Activated naive CD4-positive, alpha-beta T cell treated with anti-CD3 and anti-CD28 coated beads for 36 hours (primary cell): ENCODE measurements at regions of chr22 and their contacts with region 1.

Region 1: DNA sequence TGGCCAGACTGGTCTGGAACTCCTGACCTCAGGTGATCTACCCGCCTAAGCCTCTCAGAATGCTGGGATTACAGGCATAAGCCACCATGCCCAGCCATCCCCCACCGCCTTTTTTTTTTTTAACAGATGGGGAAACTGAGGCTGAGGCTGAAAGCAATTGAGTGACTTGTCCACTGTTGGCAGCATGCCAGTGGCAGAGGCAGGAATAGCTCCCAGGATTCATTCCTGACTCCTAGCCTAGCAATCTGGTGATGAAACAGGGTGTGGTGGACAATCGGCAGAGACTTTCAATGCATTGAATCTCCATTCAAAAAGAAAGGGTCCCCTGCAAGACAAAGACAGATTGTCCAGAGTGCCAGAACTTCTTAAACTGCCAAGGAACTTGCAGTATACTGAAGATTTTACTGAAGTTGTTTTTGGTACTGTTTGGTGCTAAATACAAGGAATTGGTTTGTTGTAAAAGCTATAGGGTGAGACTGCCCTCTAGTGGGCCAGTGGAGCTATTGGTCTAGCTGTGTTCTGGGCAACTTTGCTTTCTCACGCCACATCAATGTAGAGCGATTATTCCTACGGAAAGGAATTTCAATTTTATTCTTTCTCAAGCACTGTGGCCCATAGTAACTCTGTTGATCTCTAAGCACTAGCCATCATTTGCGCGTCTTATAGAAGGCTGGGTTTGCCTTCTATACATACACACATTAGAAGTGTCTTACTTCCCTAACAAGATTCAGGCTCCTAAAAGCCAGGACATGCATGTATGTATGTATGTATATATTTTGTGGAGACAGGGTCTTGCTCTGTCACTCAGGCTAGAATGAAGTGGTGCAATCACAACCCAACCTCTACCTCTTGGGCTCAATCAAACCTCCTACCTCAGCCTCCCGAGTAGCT is 21.0 kb downstream of the C22orf31 start:
- DNase-seq: peak; percentile 80
- H3K4me3 Mint-ChIP-seq: no peak overlapping the region
- H3K27ac Mint-ChIP-seq: no peak overlapping the region
- H3K4me1 Mint-ChIP-seq: no peaks in the 10 kb centered on the region
- H3K27me3 Mint-ChIP-seq: peaks cover 2% of the 10 kb centered on the region

Region 2: DNA sequence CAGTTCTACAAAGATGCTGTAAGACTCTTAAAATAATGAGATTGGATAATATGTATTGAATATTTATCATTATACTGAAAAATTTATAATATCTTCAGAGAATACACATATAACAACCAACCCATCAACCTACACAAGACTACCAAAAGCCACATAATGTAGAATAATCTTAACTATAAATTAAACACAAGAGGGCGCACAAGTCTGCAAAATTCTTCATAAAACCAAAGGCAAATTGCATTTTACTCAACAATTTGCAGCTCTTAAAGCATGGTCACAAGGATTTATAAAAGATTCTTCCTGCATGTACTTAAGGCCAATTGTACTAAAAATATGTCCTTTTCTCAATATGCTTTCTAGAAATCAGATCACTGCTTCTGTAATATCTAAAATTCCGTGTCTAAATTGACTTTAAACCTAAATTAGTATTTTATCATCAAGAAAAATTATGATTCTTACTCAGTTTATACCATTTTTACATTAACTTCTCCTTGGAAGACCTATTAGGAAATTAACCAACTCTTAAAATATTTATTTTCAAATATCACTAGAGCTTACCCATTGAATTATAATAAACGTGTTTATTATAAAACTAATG is 440.0 kb before region 1 on chr22:
- CTCF ChIA-PET with region 1: interaction called, 10 read pairs
- intact Hi-C with region 1: loop called (anchors 1 kb)
- DNase-seq: no peak
- H3K4me3 Mint-ChIP-seq: no peak overlapping the region
- H3K27ac Mint-ChIP-seq: no peak overlapping the region
- H3K4me1 Mint-ChIP-seq: no peaks in the 10 kb centered on the region
- H3K27me3 Mint-ChIP-seq: peaks cover 7% of the 10 kb centered on the region

Region 3: DNA sequence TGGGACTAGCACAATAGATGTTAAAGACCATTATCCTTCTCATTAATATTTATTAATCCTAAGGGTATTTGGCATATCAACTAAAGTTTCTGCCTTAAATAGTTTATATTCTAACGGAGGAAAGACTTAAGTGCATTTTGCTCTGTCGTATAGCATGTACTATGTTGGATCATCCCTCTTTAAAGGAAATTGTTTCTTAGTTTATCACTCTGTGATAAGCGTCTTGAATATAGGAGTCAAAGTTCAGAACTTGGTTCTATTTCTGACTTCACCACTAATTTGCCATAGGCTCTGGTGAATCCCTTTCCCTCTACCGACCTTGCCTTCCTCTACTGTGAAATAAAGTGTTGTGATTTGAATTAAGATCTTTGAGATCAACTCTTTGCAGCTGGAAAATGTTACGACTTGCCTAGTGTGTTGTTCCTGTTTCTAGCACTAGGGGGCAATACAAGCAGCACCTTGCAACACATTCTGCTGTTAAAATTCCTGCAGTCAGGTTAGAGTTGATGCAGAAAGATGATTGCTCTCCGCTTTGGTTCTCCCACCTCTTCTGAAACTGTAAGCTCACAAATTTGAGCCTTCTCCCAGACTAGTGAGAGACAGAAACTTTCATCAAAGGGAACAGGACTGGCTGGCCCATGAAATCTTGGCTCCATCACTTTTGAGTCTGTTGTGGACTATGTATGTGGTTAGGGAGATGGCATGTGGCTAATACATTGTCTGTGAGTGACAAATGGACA is 185.1 kb before region 1 on chr22:
- CTCF ChIA-PET with region 1: interaction called, 54 read pairs
- intact Hi-C with region 1: loop called (anchors 1 kb)
- DNase-seq: peak; percentile 64
- H3K4me3 Mint-ChIP-seq: no peak overlapping the region
- H3K27ac Mint-ChIP-seq: no peak overlapping the region
- H3K4me1 Mint-ChIP-seq: no peaks in the 10 kb centered on the region
- H3K27me3 Mint-ChIP-seq: peaks cover 2% of the 10 kb centered on the region

Region 4: DNA sequence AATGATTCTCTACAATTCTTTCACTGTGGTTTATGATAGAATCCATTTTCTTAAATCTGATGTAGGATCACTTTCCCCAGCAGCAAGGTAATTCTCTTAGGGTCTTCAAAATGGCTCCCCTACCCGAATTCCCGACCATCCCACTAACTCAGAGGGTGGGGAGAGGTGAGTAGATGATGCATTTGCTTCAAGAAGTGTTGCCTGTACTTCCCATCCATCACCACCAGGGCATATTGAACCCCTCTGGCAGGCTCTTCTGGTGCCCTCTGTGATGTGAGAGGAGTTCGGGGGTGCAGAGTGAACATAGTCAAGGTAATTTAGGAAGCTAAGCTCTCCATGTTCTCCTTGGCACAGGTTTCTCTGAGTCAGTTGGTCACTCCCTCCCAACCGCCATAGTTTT is 104.9 kb before region 1 on chr22:
- CTCF ChIA-PET with region 1: no interaction called
- intact Hi-C with region 1: no loop called
- DNase-seq: no peak
- H3K4me3 Mint-ChIP-seq: no peak overlapping the region
- H3K27ac Mint-ChIP-seq: no peak overlapping the region
- H3K4me1 Mint-ChIP-seq: no peaks in the 10 kb centered on the region
- H3K27me3 Mint-ChIP-seq: peaks cover 46% of the 10 kb centered on the region

Region 5: DNA sequence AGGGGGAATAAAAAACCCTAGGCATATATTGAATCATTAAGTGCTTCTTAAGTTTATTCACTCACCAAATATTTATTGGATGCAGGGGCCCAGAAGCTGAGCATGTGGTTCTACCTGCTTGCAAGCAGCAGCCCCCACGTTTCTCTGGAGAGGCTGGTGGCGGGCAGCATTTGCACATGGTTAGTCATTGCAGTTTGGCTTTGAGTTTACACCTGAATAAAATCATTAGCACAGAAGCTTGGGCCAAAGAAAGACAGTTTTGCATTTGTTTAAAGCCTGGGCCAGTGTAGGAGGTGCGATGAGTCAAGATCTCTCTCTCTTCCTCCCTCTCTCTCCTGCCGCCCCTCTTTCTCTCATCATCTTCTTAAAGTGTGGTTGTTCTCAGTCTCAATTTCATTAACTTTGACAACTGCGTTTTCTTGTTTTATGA is 51.6 kb before region 1 on chr22:
- CTCF ChIA-PET with region 1: no interaction called
- intact Hi-C with region 1: no loop called
- DNase-seq: peak; percentile 5
- H3K4me3 Mint-ChIP-seq: no peak overlapping the region
- H3K27ac Mint-ChIP-seq: no peak overlapping the region
- H3K4me1 Mint-ChIP-seq: peaks cover 8% of the 10 kb centered on the region
- H3K27me3 Mint-ChIP-seq: no peaks in the 10 kb centered on the region

Region 6: GRCh38 chr22:29011240-29012100 is 29.2 kb before region 1 on chr22:
- CTCF ChIA-PET with region 1: interaction called, 14 read pairs
- intact Hi-C with region 1: no loop called
- DNase-seq: no peak
- H3K4me3 Mint-ChIP-seq: no peak overlapping the region
- H3K27ac Mint-ChIP-seq: no peak overlapping the region
- H3K4me1 Mint-ChIP-seq: peaks cover 6% of the 10 kb centered on the region
- H3K27me3 Mint-ChIP-seq: peaks cover 7% of the 10 kb centered on the region